Kidney (tissue), 22 donors: ENCODE measurements at regions of chr15 and their contacts with region 1.

Region 1: GRCh38 chr15:24976932-24977331 is 22.1 kb downstream of the SNRPN start:
- DNase-seq: no peak
- H3K4me3 ChIP-seq: no peak overlapping the region
- H3K27ac ChIP-seq: no peak overlapping the region
- H3K4me1 ChIP-seq: no peaks in the 10 kb centered on the region
- H3K27me3 ChIP-seq: no peaks in the 10 kb centered on the region
- CTCF ChIP-seq: no peak

Region 2: GRCh38 chr15:24865303-24865702 is 111.6 kb before region 1 on chr15:
- intact Hi-C with region 1: no loop called
- DNase-seq: no peak
- H3K4me3 ChIP-seq: no peak overlapping the region
- H3K27ac ChIP-seq: no peak overlapping the region
- H3K4me1 ChIP-seq: no peaks in the 10 kb centered on the region
- H3K27me3 ChIP-seq: no peaks in the 10 kb centered on the region
- CTCF ChIP-seq: no peak

Region 3: DNA sequence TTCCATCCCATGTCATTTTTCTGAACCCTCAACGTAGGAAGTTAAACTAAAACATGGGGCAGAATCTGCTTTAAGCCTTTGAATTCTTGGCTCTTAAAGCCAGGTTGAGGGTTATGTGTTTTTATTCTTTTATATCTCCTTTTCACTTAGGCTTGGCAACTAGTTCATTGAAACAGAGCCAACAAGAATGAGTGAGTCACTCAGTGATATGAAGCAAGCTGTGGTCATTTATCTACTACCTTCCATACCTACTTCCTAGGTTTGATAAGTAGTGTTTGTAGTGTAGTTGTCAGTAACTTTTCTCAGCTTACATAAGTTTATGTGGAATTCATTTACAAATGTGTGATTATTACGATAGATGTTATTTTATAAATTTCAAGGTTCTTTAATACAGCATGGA is 45.3 kb after region 1 on chr15:
- intact Hi-C with region 1: loop called (anchors 5 kb)
- DNase-seq: no peak
- H3K4me3 ChIP-seq: no peak overlapping the region
- H3K27ac ChIP-seq: no peak overlapping the region
- H3K4me1 ChIP-seq: no peaks in the 10 kb centered on the region
- H3K27me3 ChIP-seq: no peaks in the 10 kb centered on the region
- CTCF ChIP-seq: no peak